BJ (cell line): ENCODE measurements at regions of chr12 and their contacts with region 1.

Region 1: GRCh38 chr12:116053479-116054200 is 223.9 kb downstream of the MED13L start:
- DNase-seq: peak; percentile 13
- H3K4me3 ChIP-seq: no peak overlapping the region
- H3K27me3 ChIP-seq: no peaks in the 10 kb centered on the region
- CTCF ChIP-seq: no peak

Region 2: GRCh38 chr12:114319422-114319821 is 1734.2 kb before region 1 on chr12:
- CTCF ChIA-PET with region 1: no interaction called
- POLR2A ChIA-PET with region 1: no interaction called
- DNase-seq: peak; percentile 69
- H3K4me3 ChIP-seq: no peak overlapping the region
- H3K27me3 ChIP-seq: no peaks in the 10 kb centered on the region
- CTCF ChIP-seq: no peak

Region 3: GRCh38 chr12:116066381-116067230 is 13.0 kb after region 1 on chr12:
- CTCF ChIA-PET with region 1: interaction called, 10 read pairs
- POLR2A ChIA-PET with region 1: no interaction called
- DNase-seq: no peak
- H3K4me3 ChIP-seq: no peak overlapping the region
- H3K27me3 ChIP-seq: no peaks in the 10 kb centered on the region
- CTCF ChIP-seq: peak; percentile 73

Region 4: DNA sequence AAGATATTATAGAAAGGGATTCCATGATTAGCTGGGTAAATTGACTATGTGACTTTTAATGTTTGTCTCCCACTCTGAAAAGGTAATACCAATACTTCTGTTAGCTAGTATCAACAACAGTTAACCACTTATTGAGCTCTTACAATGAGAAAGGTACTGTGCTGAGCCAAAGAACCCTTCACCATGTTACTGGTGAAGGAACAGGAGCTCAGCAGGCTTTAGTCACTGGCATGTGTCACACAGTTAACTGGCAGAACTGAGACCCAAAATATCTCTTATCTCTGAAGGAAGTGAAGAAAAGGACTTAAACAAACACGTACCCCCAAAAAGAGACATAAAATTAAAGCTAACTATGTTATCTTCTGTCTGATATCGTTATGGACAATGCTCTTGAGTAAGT is 53.2 kb after region 1 on chr12:
- CTCF ChIA-PET with region 1: no interaction called
- POLR2A ChIA-PET with region 1: no interaction called
- DNase-seq: no peak
- H3K4me3 ChIP-seq: no peak overlapping the region
- H3K27me3 ChIP-seq: no peaks in the 10 kb centered on the region
- CTCF ChIP-seq: no peak